Sciatic nerve (tissue), 2 donors: ENCODE measurements at regions of chr16 and their contacts with region 1.

Region 1: DNA sequence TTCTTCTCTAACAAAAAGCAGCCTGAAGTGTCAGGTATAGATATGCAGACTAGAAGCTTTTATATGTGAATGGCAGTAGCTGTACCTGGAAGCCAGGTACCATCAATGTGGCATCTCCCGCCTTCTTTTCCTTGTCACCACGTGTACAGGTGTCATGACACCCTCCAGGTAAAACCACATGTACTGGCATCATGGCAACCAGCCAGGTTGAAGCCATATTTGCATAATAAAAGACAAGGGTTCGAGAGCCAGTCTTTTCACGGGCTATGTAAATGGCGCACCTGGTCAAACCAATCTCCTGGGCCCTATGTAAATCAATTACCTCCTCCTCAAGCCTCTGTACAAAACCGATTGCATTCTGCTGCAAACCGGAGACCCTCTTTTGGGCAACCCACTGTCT is 541.3 kb downstream of the CDH11 start:
- DNase-seq: no peak
- ATAC-seq: no peak

Region 2: DNA sequence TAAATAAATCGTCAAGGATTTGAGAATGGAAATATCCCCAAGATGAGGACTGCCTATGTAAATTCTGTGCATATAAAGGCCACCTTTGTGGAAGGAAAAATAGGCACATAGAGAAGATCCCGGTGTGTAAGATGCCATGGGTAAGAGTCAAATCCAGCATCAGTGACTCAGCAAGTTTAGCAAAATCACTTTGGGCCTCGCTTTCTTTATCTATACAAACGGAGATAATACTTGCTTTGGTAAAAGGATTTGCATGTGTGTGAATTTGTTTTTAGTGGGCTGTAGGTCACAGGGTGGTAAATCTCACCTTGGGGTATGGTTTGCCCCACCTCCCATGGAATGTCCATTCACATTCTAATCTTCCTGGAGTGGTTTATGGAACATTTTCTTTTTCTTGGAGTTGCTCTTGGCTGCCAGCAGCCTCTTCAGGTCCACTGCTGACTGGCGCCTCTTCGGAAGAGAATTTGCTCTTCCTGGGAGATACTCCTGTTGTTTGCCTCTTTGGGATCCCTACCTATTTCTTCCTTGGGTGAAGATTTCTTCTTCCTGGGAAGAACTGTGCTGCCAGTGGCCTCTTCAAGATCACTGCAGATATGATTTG is 46.3 kb before region 1 on chr16:
- intact Hi-C with region 1: no loop called
- DNase-seq: no peak
- ATAC-seq: no peak

Region 3: GRCh38 chr16:64823481-64824075 is 243.0 kb after region 1 on chr16:
- intact Hi-C with region 1: loop called (anchors 5 kb)
- DNase-seq: no peak
- ATAC-seq: no peak